ENCODE measurements at regions of chr7 and their contacts with region 1.

Region 1: DNA sequence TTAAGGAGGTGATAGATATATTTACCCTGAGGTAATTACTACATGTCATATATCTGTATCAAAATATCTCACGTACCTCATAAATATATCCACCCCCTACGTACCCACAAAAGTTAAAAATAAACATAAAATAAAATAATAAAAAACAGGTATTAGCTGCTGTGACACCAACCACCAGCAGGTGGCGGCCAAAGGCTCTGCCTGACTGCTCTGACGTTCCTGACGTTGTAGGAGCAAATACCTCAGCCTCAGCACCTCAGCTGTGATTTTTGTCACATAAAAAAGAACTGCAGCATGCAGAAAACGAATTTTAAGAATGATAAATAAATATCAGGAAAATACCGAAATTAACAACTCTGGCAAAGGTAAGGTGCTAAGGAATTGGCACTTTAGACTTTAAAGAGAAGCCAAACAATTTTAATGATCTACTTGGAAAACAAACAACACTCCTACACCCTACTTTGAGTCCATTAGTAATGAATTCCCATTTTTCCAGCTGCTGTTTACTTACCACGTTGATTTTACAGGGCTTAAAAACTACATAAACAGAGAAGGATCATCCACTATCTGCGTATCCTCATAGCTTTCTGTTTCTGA is 125.4 kb upstream of the TARP start:
- DNase-seq: peak in 1 of 2 donors; percentile 65
- H3K4me3 ChIP-seq: no peak overlapping the region
- H3K27ac ChIP-seq: no peak overlapping the region
- H3K4me1 ChIP-seq: no peaks in the 10 kb centered on the region
- H3K27me3 ChIP-seq: no peaks in the 10 kb centered on the region
- CTCF ChIP-seq: peak; percentile 37 to 84 (median 72)

Region 2: DNA sequence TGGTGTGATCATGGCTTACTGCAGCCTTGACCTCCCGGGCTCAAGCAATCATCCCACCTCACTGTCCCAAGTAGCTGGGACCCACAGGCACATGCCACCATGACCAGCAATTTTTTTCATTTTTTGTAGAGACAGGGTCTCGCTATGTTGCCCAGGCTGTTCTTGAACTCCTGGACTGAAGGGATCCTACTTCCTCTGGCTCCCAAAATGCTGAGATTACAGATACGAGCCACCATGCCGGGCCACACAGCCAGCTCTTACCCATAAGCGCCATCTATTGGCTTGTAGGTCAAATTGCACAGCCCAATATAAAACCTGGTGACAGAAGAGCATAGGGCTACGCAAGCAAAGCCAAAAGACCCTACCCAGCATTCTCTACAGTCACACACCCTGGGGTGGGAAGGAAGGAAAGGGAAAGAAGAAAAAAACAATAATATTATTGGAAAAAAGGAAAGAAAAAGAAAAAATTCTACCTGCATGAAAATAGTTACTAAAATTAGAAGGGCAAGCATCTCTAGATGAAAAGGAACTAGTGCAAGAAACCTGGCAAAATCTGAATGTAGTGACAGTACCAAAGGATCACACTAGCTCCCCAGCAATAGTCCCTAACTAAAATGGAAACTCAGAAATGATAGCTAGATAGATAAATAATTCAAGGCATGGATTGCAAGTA is 261.7 kb after region 1 on chr7:
- intact Hi-C with region 1: loop called (anchors 2 kb)
- DNase-seq: no peak
- H3K4me3 ChIP-seq: no peak overlapping the region
- H3K27ac ChIP-seq: no peak overlapping the region
- H3K4me1 ChIP-seq: no peaks in the 10 kb centered on the region
- H3K27me3 ChIP-seq: no peaks in the 10 kb centered on the region
- CTCF ChIP-seq: peak; percentile 22 to 59 (median 30)

Region 3: GRCh38 chr7:38748056-38748611 is 349.3 kb after region 1 on chr7:
- intact Hi-C with region 1: loop called (anchors 5 kb)
- DNase-seq: no peak
- H3K4me3 ChIP-seq: no peak overlapping the region
- H3K27ac ChIP-seq: no peak overlapping the region
- H3K4me1 ChIP-seq: no peaks in the 10 kb centered on the region
- H3K27me3 ChIP-seq: no peaks in the 10 kb centered on the region
- CTCF ChIP-seq: peak in 1 of 3 experiments; percentile 45

Region 4: GRCh38 chr7:39517240-39517639 is 1118.4 kb after region 1 on chr7:
- intact Hi-C with region 1: loop called (anchors 5 kb)
- DNase-seq: no peak
- H3K4me3 ChIP-seq: no peak overlapping the region
- H3K27ac ChIP-seq: no peak overlapping the region
- H3K4me1 ChIP-seq: no peaks in the 10 kb centered on the region
- H3K27me3 ChIP-seq: no peaks in the 10 kb centered on the region
- CTCF ChIP-seq: no peak

Measured in ascending aorta (tissue), 2 donors.